ENCODE measurements at regions of chr22 and their contacts with region 1.

Region 1: DNA sequence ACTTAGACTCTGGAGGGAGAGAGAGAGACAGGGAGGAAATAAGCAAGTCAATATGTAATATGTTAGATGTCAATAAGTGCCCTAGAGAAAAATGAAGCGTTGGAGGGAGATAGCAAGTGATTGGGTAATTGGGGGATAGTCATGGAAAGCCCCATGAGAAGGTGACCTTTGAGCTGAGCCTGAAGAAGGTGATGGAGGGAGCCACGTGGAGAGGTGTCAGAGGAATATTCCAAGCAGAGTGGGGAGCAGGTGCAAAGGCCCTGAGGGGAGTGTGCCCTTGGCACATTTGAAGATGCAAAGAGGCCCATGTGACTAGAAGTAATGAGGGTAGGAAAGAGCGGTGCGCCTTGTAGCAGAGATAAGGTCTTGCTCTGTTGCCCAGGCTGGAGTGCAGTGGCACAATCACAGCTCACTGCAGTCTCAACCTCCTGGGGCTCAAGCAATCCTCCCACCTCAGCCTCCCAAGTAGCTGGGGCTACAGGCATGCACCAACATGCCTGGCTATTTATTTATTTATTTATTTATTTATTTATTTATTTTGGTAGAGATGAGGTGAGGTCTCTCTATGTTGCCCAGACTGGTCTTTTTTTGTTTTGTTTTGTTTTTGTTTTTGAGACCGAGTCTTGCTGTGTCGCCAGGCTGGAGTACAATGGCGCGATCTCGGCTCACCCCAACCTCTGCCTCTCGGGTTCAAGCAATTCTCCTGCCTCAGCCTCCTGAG is 2.1 kb downstream of the LHFPL7 start:
- DNase-seq: no peak
- H3K4me3 Mint-ChIP-seq: no peak overlapping the region
- H3K27ac Mint-ChIP-seq: no peak overlapping the region
- H3K4me1 Mint-ChIP-seq: peaks cover 12% of the 10 kb centered on the region
- H3K27me3 Mint-ChIP-seq: no peaks in the 10 kb centered on the region
- CTCF ChIP-seq: no peak

Region 2: GRCh38 chr22:25007444-25008106 is 63.2 kb after region 1 on chr22:
- CTCF ChIA-PET with region 1: no interaction called
- POLR2A ChIA-PET with region 1: no interaction called
- intact Hi-C with region 1: no loop called
- DNase-seq: no peak
- H3K4me3 Mint-ChIP-seq: no peak overlapping the region
- H3K27ac Mint-ChIP-seq: peak overlapping the region; percentile 86
- H3K4me1 Mint-ChIP-seq: peaks cover 11% of the 10 kb centered on the region
- H3K27me3 Mint-ChIP-seq: no peaks in the 10 kb centered on the region
- CTCF ChIP-seq: no peak

Region 3: GRCh38 chr22:25057013-25057881 is 112.9 kb after region 1 on chr22:
- CTCF ChIA-PET with region 1: interaction called, 34 read pairs
- POLR2A ChIA-PET with region 1: no interaction called
- intact Hi-C with region 1: no loop called
- DNase-seq: peak; percentile 65
- H3K4me3 Mint-ChIP-seq: no peak overlapping the region
- H3K27ac Mint-ChIP-seq: no peak overlapping the region
- H3K4me1 Mint-ChIP-seq: peaks cover 8% of the 10 kb centered on the region
- H3K27me3 Mint-ChIP-seq: no peaks in the 10 kb centered on the region
- CTCF ChIP-seq: peak; percentile 82

Measured in MCF 10A (cell line).